HepG2 (cell line): ENCODE measurements at regions of chr18 and their contacts with region 1.

Region 1: GRCh38 chr18:23401400-23402347 is 51.4 kb upstream of the RIOK3 start:
- DNase-seq: peak; percentile 81
- ATAC-seq: peak; percentile 96
- H3K4me3 ChIP-seq: peak overlapping the region in 1 of 3 experiments; percentile 38; a peak in 1 of 6 replicates
- H3K27ac ChIP-seq: peak overlapping the region; percentile 83
- H3K4me1 ChIP-seq: peaks cover 46% of the 10 kb centered on the region
- H3K27me3 ChIP-seq: no peaks in the 10 kb centered on the region
- CTCF ChIP-seq: no peak
- EP300 ChIP-seq: peak in 1 of 2 experiments; percentile 82; a peak in 2 of 4 replicates
- POLR2A ChIP-seq: no peak
- RAD21 ChIP-seq: no peak

Region 2: DNA sequence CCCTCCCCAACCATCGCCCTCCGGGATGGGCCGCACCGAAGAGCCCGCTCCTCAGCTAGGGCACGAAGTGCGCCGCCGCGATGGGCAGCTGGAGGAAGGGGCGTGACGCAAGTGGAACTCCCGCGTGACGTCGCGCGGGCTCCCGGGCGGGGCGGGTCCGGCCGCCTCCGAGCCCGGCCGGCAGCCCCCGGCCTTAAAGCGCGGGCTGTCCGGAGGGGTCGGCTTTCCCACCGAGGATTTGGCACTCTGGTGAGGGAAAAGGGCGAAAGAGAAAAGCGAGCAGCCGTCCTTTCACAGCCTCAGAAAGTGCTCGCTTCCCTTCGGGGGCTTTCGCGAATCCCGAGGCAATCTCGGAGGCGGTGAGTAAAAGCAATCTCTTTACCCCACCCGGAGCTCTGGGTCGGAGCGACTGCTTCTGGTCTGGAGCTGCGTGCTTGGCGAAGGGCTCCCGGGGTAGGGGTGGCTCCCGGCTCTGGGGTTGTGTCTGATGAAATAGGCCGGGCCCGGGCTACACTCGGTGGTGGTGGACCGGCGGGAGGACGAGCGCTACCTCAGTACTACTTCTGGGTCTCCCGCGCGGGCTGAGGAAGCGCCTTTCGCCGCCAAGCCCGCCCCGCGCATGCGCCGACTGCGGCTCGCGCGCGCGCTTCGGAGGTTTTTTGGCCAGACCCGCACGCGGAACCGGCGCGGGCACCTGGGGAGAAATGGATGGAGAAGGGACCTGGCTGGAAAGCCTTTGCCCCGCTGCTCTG is 468.3 kb before region 1 on chr18 and contains the start of gene RBBP8:
- CTCF ChIA-PET with region 1: no interaction called
- POLR2A ChIA-PET with region 1: no interaction called
- in situ Hi-C with region 1: no loop called
- intact Hi-C with region 1: loop called (anchors 10 kb)
- DNase-seq: peak; percentile 73
- ATAC-seq: peak; percentile 94
- H3K4me3 ChIP-seq: peak within 1 kb of the TSS; percentile 80 to 90 (median 88)
- H3K27ac ChIP-seq: peak within 1 kb of the TSS; percentile 92
- H3K4me1 ChIP-seq: peaks cover 39% of the 10 kb centered on the region
- H3K27me3 ChIP-seq: no peaks in the 10 kb centered on the region
- CTCF ChIP-seq: 0 out of 2 replicates have a peak, but pooled peaks have one; percentile 20
- EP300 ChIP-seq: no peak
- POLR2A ChIP-seq: peak; percentile 72 to 83
- RAD21 ChIP-seq: no peak; the same call in 1 of the 2 replicates
- total RNA-seq, gene RBBP8: 47.4 and 68.5 TPM in 2 replicates

Region 3: GRCh38 chr18:23071285-23071684 is 330.4 kb before region 1 on chr18:
- CTCF ChIA-PET with region 1: no interaction called
- POLR2A ChIA-PET with region 1: no interaction called
- in situ Hi-C with region 1: loop called (anchors 10 kb)
- intact Hi-C with region 1: no loop called
- DNase-seq: no peak
- ATAC-seq: no peak
- H3K4me3 ChIP-seq: no peak overlapping the region
- H3K27ac ChIP-seq: no peak overlapping the region
- H3K4me1 ChIP-seq: peaks cover 21% of the 10 kb centered on the region
- H3K27me3 ChIP-seq: 0 out of 5 replicates have a peak, but pooled peaks cover 0 to 9% of the 10 kb centered on the region in 2 experiments
- CTCF ChIP-seq: no peak
- EP300 ChIP-seq: no peak
- POLR2A ChIP-seq: no peak
- RAD21 ChIP-seq: no peak

Region 4: GRCh38 chr18:23384778-23385736 is 16.6 kb before region 1 on chr18:
- CTCF ChIA-PET with region 1: no interaction called
- POLR2A ChIA-PET with region 1: interaction called, 10 read pairs
- in situ Hi-C with region 1: no loop called
- intact Hi-C with region 1: no loop called
- DNase-seq: peak; percentile 73
- ATAC-seq: peak; percentile 86
- H3K4me3 ChIP-seq: no peak overlapping the region
- H3K27ac ChIP-seq: peak overlapping the region; percentile 59
- H3K4me1 ChIP-seq: peaks cover 54% of the 10 kb centered on the region
- H3K27me3 ChIP-seq: no peaks in the 10 kb centered on the region
- CTCF ChIP-seq: no peak
- EP300 ChIP-seq: peak in 1 of 2 experiments; percentile 85; a peak in 2 of 4 replicates
- POLR2A ChIP-seq: no peak
- RAD21 ChIP-seq: no peak